Colonic mucosa (tissue), 4 donors: ENCODE measurements at regions of chr2 and their contacts with region 1.

Region 1: DNA sequence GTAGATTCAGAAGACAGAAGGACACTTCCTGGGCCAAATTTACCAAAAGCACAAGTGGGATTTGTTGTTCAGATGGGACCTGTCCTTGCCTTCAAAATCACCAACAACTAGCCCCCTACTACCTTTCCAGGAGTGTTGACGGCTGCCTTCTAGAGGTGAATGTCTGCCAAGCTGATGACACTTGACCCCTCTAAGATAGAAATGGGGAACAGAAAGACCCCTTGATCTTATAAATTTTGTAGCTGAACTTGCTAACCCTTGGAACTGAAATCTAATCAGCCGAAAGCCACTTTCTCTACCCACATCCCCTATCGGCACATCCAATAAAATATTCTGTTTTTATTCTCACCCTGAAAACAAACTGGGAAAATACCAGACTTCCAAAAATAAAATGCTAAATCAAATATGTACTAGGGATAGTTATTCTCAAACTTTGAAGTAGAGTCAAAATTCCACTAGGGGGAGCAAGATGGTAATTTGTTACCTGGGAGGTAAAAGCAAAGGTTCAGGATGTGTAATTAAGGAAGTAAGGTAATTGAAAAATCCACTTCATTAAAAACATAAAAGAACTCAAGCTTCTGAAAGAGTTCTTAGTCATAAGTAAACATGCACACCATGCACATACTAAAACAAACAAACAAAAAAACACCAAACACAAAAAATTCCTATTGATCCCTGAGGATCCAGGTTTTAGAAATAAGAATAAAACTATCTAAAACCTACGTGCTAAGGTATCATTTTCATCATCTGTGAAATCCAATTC is 119.2 kb downstream of the ANKRD44 start:
- DNase-seq: no peak
- H3K4me3 ChIP-seq: no peak overlapping the region
- H3K27ac ChIP-seq: no peak overlapping the region
- H3K4me1 ChIP-seq: no peaks in the 10 kb centered on the region
- H3K27me3 ChIP-seq: no peaks in the 10 kb centered on the region
- CTCF ChIP-seq: peak; percentile 73

Region 2: DNA sequence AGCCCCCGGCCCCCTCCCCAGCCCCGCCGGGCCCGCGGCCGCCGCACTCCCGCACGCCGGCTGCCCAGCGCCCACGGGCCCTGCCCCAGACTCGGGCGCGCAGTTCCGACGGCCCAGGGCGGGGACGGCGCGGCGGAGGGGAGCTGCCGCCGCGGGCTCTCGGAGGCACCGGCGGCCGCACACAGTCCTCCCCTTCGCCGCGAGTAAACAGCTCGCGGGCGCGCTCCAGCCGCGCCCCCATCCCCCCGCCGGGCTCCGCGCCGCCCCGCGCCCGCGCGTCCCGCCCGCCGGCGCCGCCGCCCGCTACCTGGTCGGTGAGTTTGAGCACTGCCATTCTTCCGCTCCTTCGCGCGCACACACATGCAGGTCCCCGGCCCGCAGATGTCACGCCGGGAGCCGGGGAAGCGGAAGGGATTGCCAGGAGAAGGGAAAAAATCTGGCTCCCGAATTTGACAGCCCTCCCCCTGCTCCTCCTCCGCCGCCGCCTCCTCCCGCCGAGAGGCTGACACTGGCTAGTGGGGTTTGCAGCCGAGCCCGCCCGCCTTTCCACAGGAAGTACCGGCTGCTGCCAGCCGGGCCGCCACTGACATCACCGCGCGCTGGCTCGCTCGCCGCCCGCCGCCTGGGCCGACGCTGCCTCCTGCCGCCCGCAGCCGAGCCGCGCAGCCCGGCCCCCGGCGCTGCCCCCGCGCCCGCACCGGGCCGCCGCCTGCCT is 119.1 kb after region 1 on chr2 and contains the start of gene ANKRD44:
- intact Hi-C with region 1: loop called (anchors 2 kb)
- DNase-seq: peak; percentile 87
- H3K4me3 ChIP-seq: peak within 1 kb of the TSS; percentile 59
- H3K27ac ChIP-seq: peak within 1 kb of the TSS; percentile 60
- H3K4me1 ChIP-seq: no peaks in the 10 kb centered on the region
- H3K27me3 ChIP-seq: no peaks in the 10 kb centered on the region
- CTCF ChIP-seq: no peak
- total RNA-seq, gene ANKRD44: 7.0 to 7.9 TPM

Region 3: GRCh38 chr2:197378494-197379307 is 187.3 kb after region 1 on chr2:
- intact Hi-C with region 1: loop called (anchors 2 kb)
- DNase-seq: peak; percentile 53
- H3K4me3 ChIP-seq: no peak overlapping the region
- H3K27ac ChIP-seq: no peak overlapping the region
- H3K4me1 ChIP-seq: no peaks in the 10 kb centered on the region
- H3K27me3 ChIP-seq: no peaks in the 10 kb centered on the region
- CTCF ChIP-seq: peak; percentile 63